OCI-LY7 (cell line): ENCODE measurements at regions of chr7 and their contacts with region 1.

Region 1: GRCh38 chr7:69992938-69993337 is 394.7 kb downstream of the AUTS2 start:
- DNase-seq: no peak
- H3K4me3 ChIP-seq: no peak overlapping the region
- H3K27ac ChIP-seq: no peak overlapping the region
- H3K4me1 ChIP-seq: no peaks in the 10 kb centered on the region
- CTCF ChIP-seq: no peak

Region 2: DNA sequence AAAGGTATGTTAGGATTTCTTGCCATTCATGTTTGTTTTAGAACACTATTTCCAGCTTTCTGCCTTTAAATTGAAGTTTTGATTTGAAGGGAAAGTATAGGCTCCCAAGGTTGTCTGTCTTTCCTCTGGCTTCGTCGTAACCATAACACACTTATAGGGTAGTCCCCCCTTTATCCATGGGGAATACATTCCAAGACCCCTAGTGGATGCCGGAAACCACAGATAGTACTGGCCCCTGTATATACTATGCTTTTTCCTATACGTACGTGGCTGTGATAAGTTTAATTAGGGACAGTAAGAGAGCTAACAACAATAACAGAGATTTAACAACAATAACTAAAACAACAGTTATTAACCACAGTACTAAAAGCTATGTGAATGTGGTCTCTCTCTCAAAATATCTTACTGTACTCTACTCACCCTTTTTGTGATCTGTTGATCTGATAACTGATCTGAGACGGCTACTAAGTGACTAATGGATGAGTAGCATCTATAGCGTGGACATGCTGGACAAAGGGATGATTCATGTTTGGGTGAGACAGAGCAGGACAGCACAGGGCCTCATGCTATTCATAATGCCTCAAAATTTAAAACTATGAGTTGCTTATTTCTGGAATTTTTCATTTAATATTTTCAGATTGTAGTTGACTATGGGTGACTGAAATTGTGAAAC is 121.6 kb before region 1 on chr7:
- CTCF ChIA-PET with region 1: no interaction called
- POLR2A ChIA-PET with region 1: no interaction called
- intact Hi-C with region 1: no loop called
- DNase-seq: no peak
- H3K4me3 ChIP-seq: no peak overlapping the region
- H3K27ac ChIP-seq: no peak overlapping the region
- H3K4me1 ChIP-seq: peaks cover 22% of the 10 kb centered on the region
- CTCF ChIP-seq: no peak

Region 3: GRCh38 chr7:70006261-70006920 is 13.5 kb after region 1 on chr7:
- CTCF ChIA-PET with region 1: no interaction called
- POLR2A ChIA-PET with region 1: interaction called, 10 read pairs
- intact Hi-C with region 1: no loop called
- DNase-seq: peak; percentile 69
- H3K4me3 ChIP-seq: peak overlapping the region; percentile 37
- H3K27ac ChIP-seq: peak overlapping the region; percentile 61
- H3K4me1 ChIP-seq: peaks cover 30% of the 10 kb centered on the region
- CTCF ChIP-seq: no peak